Common myeloid progenitor, CD34-positive (primary cell): ENCODE measurements at regions of chr3 and their contacts with region 1.

Region 1: GRCh38 chr3:115217678-115218451 is 70.8 kb upstream of the ZBTB20 start:
- DNase-seq: peak; percentile 40 to 76 (median 67)
- H3K4me3 ChIP-seq: no peak overlapping the region
- H3K27ac ChIP-seq: no peak overlapping the region
- H3K4me1 ChIP-seq: peaks cover 0 to 5% (median 1%) of the 10 kb centered on the region in 4 experiments
- H3K27me3 ChIP-seq: peaks cover 0 to 6% (median 3%) of the 10 kb centered on the region in 5 experiments

Region 2: GRCh38 chr3:114994554-114995341 is 223.1 kb before region 1 on chr3:
- CTCF ChIA-PET with region 1: no interaction called
- POLR2A ChIA-PET with region 1: no interaction called
- DNase-seq: no peak
- H3K4me3 ChIP-seq: no peak overlapping the region
- H3K27ac ChIP-seq: no peak overlapping the region
- H3K4me1 ChIP-seq: no peaks in the 10 kb centered on the region
- H3K27me3 ChIP-seq: no peaks in the 10 kb centered on the region

Region 3: GRCh38 chr3:115019900-115020299 is 198.0 kb before region 1 on chr3:
- CTCF ChIA-PET with region 1: no interaction called
- POLR2A ChIA-PET with region 1: no interaction called
- DNase-seq: peak; percentile 25 to 76 (median 59)
- H3K4me3 ChIP-seq: peak overlapping the region in 1 of 7 experiments; percentile 3
- H3K27ac ChIP-seq: peak overlapping the region in 1 of 2 experiments; percentile 35
- H3K4me1 ChIP-seq: peaks cover 0 to 5% (median 2%) of the 10 kb centered on the region in 4 experiments
- H3K27me3 ChIP-seq: no peaks in the 10 kb centered on the region

Region 4: DNA sequence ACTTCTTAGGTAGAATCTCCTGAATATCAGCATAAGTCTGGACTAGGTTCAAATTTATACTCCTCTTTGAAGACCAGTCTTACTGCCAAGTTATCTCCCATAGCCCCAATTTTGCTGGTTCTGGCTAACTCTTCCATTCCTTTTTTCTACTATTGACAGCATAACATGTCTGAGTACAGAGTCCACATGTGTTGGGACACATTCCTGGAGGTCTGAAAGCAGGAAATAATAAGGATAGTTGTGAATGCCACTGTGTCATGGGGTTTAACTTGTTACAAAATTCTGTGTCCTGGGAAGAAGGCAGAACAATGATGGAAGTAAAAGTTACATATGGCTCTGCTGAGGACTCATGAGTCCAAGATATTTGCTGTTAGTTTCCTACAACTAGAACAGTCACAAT is 13.4 kb before region 1 on chr3:
- CTCF ChIA-PET with region 1: no interaction called
- POLR2A ChIA-PET with region 1: no interaction called
- DNase-seq: no peak
- H3K4me3 ChIP-seq: no peak overlapping the region
- H3K27ac ChIP-seq: no peak overlapping the region
- H3K4me1 ChIP-seq: no peaks in the 10 kb centered on the region
- H3K27me3 ChIP-seq: no peaks in the 10 kb centered on the region

Region 5: GRCh38 chr3:115687721-115688120 is 469.9 kb after region 1 on chr3:
- CTCF ChIA-PET with region 1: interaction called, 18 read pairs
- POLR2A ChIA-PET with region 1: no interaction called
- DNase-seq: no peak
- H3K4me3 ChIP-seq: no peak overlapping the region
- H3K27ac ChIP-seq: no peak overlapping the region
- H3K4me1 ChIP-seq: no peaks in the 10 kb centered on the region
- H3K27me3 ChIP-seq: peaks cover 0 to 52% (median 26%) of the 10 kb centered on the region in 5 experiments

Region 6: GRCh38 chr3:115692887-115693524 is 475.1 kb after region 1 on chr3:
- CTCF ChIA-PET with region 1: interaction called, 18 read pairs
- POLR2A ChIA-PET with region 1: no interaction called
- DNase-seq: peak; percentile 61 to 70 (median 65)
- H3K4me3 ChIP-seq: no peak overlapping the region
- H3K27ac ChIP-seq: no peak overlapping the region
- H3K4me1 ChIP-seq: no peaks in the 10 kb centered on the region
- H3K27me3 ChIP-seq: peaks cover 0 to 14% (median 4%) of the 10 kb centered on the region in 5 experiments

Region 7: GRCh38 chr3:115814778-115815380 is 597.0 kb after region 1 on chr3:
- CTCF ChIA-PET with region 1: interaction called, 10 read pairs
- POLR2A ChIA-PET with region 1: no interaction called
- DNase-seq: peak; percentile 49 to 67 (median 51)
- H3K4me3 ChIP-seq: no peak overlapping the region
- H3K27ac ChIP-seq: no peak overlapping the region
- H3K4me1 ChIP-seq: no peaks in the 10 kb centered on the region
- H3K27me3 ChIP-seq: peaks cover 0 to 5% (median 2%) of the 10 kb centered on the region in 5 experiments